Adrenal gland (tissue), 19 donors: ENCODE measurements at regions of chr3 and their contacts with region 1.

Region 1: DNA sequence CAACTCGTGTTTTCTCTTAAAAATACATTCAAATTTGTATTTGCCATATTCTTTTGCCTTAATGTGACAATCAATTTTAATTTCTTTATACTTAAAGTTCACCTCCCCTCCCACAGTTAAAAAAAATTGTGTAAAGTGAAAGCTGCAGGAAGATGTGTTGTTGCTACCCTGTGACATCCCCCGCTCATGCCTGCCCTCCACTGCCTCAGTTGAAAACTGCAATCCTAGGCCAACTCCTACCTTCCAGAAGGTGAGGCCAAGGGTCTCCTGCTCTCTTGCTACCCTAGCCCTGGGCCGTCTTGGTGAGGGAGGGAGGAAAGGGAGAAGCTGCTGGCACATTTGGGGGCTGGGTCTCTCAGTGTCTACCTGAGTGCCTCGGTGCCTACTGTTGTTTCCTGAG is 57.0 kb upstream of the CMTM7 start:
- DNase-seq: peak in 1 of 7 donors; percentile 44
- H3K4me3 ChIP-seq: no peak overlapping the region
- H3K27ac ChIP-seq: no peak overlapping the region
- H3K4me1 ChIP-seq: no peaks in the 10 kb centered on the region
- H3K27me3 ChIP-seq: no peaks in the 10 kb centered on the region
- CTCF ChIP-seq: no peak
- POLR2A ChIP-seq: no peak

Region 2: DNA sequence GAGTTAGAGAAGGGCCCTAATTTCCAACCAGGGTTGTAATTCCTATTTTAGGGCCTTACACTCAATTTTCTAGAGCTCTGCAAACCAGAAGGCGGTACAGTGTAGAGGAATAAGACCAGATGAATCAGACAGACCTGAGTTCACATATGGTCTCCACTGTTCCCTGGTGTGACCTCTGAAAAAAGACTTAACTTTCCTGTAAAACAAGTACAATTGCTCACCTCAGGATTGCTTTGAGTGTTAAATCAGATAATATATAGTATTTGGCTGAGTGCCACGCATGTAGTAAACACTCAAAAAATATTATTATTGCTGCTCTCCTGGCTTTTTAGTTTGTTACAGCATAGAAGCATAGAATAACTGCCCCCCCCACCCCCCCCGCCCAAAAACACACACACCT is 853.0 kb before region 1 on chr3:
- intact Hi-C with region 1: no loop called
- DNase-seq: no peak
- H3K4me3 ChIP-seq: no peak overlapping the region
- H3K27ac ChIP-seq: no peak overlapping the region
- H3K4me1 ChIP-seq: peaks cover 0 to 6% of the 10 kb centered on the region in 2 donors
- H3K27me3 ChIP-seq: no peaks in the 10 kb centered on the region
- CTCF ChIP-seq: no peak
- POLR2A ChIP-seq: no peak

Region 3: GRCh38 chr3:32184187-32184730 is 150.4 kb before region 1 on chr3:
- intact Hi-C with region 1: loop called in 1 of 2 experiments (anchors 10 kb)
- DNase-seq: no peak
- H3K4me3 ChIP-seq: no peak overlapping the region
- H3K27ac ChIP-seq: no peak overlapping the region
- H3K4me1 ChIP-seq: no peaks in the 10 kb centered on the region
- H3K27me3 ChIP-seq: no peaks in the 10 kb centered on the region
- CTCF ChIP-seq: no peak
- POLR2A ChIP-seq: no peak

Region 4: GRCh38 chr3:32296256-32297204 is 38.1 kb before region 1 on chr3:
- intact Hi-C with region 1: loop called (anchors 5 kb)
- DNase-seq: peak; percentile 41 to 87 (median 69)
- H3K4me3 ChIP-seq: no peak overlapping the region
- H3K27ac ChIP-seq: no peak overlapping the region
- H3K4me1 ChIP-seq: peaks cover 5 to 24% of the 10 kb centered on the region in 2 donors
- H3K27me3 ChIP-seq: no peaks in the 10 kb centered on the region
- CTCF ChIP-seq: peak; percentile 81 to 91 (median 84)
- POLR2A ChIP-seq: no peak

Region 5: GRCh38 chr3:32460031-32460749 is 125.5 kb after region 1 on chr3:
- intact Hi-C with region 1: no loop called
- DNase-seq: no peak
- H3K4me3 ChIP-seq: no peak overlapping the region
- H3K27ac ChIP-seq: no peak overlapping the region
- H3K4me1 ChIP-seq: no peaks in the 10 kb centered on the region
- H3K27me3 ChIP-seq: no peaks in the 10 kb centered on the region
- CTCF ChIP-seq: no peak
- POLR2A ChIP-seq: no peak